GM23248 (cell line): ENCODE measurements at regions of chr1 and their contacts with region 1.

Region 1: GRCh38 chr1:94456736-94457135 is 38.5 kb downstream of the ABCD3 start:
- DNase-seq: peak; percentile 5
- H3K4me3 ChIP-seq: no peak overlapping the region
- H3K27ac ChIP-seq: no peak overlapping the region
- H3K4me1 ChIP-seq: peaks cover 6% of the 10 kb centered on the region; the same call in 1 of the 2 replicates
- H3K27me3 ChIP-seq: no peaks in the 10 kb centered on the region

Region 2: DNA sequence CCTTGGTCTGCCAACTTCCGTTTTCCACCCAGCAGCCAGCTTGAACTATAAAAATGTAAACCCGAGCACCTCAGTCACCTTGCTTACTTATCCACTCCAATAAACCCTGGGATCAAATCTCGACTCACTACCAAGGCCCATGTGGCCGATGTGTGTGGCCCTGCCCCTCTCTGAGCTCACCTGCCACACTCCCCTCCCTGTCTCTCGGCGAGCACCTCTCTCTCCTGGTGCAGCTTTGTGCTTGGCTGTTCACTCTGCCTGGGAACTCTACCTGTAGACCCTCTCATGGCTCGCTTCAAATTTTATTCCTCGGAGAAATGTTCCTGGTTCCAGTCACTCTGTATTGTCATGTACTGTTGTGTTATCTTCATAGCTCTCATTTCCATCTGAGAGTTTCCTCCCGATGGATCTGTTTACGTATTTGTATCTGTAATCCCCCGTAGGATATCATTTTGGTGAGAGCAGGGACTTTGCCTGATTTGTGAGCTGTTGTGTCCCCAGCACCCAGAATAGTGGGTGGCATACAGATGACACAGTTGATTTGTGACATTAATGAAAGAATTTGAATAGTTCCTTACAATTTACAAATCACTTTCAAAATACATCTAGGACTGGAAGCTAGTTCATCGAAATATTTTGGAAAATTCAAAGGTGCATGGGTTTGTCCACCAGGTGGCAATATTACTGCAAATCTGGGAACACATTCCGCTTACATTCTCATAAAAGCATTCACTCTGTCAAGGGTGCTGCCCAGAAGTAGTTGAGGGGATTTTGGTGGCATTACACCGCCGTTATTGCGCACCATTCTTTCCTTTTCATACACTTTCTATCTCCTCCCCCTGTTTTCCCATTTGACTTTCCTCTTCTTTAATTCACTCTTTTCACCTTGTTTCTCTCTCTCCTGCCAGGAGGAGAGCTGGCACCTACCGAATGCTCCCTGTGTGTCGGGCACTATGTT is 431.1 kb before region 1 on chr1:
- in situ Hi-C with region 1: loop called (anchors 10 kb)
- DNase-seq: peak; percentile 82
- H3K4me3 ChIP-seq: no peak overlapping the region
- H3K27ac ChIP-seq: no peak overlapping the region
- H3K4me1 ChIP-seq: peaks cover 24% of the 10 kb centered on the region
- H3K27me3 ChIP-seq: no peaks in the 10 kb centered on the region

Region 3: DNA sequence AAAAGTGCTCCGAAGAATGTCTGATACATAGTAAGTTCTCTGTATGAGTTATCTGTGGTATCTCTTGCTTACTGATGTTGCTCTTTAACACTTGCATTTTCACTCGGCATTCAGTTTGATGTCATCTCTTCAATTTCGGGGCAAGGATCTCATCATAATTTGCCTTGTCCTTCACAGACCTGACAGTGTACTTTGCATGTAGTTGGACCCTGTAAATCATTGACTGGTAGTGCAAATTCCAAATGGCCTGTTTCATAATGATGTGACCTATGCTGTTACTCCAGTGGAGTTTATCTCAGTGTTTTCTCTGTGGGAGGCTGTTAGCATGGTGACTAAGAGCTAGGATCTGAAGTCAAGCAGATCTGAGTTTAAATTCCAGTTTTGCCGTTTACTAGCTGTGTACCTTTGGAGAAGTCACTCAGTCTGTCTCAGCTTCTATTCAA is 72.7 kb before region 1 on chr1:
- in situ Hi-C with region 1: no loop called
- DNase-seq: peak; percentile 31
- H3K4me3 ChIP-seq: no peak overlapping the region
- H3K27ac ChIP-seq: no peak overlapping the region
- H3K4me1 ChIP-seq: no peaks in the 10 kb centered on the region; the same call in 1 of the 2 replicates
- H3K27me3 ChIP-seq: 0 out of 2 replicates have a peak, but pooled peaks cover 19% of the 10 kb centered on the region